Esophagus muscularis mucosa (tissue), 4 donors: ENCODE measurements at regions of chr3 and their contacts with region 1.

Region 1: GRCh38 chr3:50227390-50228183 is 8.4 kb upstream of the GNAI2 start:
- DNase-seq: peak; percentile 95
- H3K4me3 ChIP-seq: peak overlapping the region; percentile 55 to 75 (median 65)
- H3K27ac ChIP-seq: peak overlapping the region; percentile 57 to 73 (median 62)
- H3K4me1 ChIP-seq: peaks cover 17 to 28% (median 27%) of the 10 kb centered on the region in 4 donors
- H3K27me3 ChIP-seq: peaks cover 0 to 7% (median 0%) of the 10 kb centered on the region in 4 donors
- CTCF ChIP-seq: peak; percentile 96 to 97 (median 97)
- EP300 ChIP-seq: no peak
- POLR2A ChIP-seq: no peak

Region 2: DNA sequence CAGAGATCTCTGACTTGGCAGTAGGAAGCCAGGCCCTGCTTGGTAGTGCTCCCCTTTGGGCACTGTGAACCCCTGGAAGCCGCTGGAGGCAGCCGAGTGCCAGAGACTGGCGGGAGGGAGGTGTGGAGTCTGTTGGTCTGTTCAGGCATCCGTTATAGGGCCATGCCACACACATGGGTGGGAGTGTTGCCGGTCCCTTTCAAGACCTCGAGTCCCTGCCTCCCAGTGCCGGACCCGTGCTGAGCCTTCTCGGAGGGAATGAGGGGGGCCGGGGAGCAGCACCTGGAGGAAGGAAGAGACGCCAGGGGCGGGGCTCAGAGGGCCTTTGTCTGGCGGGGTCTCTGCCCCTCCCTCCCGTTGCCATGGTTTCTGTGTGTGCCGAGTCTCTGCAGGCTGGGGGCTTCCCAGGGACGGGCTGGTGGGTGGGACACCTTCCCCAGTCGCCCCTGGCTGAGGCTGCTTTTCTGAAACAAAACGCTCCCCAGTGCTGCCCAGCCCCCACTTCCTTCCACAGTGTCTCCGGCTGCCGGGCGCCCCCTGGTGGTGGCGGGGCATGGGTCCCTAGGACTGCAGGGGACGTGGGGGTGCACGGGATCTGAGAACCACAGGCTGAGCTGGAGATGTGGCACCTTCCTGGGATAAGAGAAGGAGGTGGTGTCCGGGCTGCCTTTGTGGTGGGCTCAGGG is 18.4 kb after region 1 on chr3:
- intact Hi-C with region 1: loop called (anchors 1 kb)
- DNase-seq: peak; percentile 98
- H3K4me3 ChIP-seq: peak overlapping the region; percentile 44 to 62 (median 50)
- H3K27ac ChIP-seq: peak overlapping the region; percentile 86 to 92 (median 90)
- H3K4me1 ChIP-seq: peaks cover 100% of the 10 kb centered on the region in 4 donors
- H3K27me3 ChIP-seq: no peaks in the 10 kb centered on the region
- CTCF ChIP-seq: peak; percentile 97 to 98 (median 98)
- EP300 ChIP-seq: no peak
- POLR2A ChIP-seq: no peak

Region 3: GRCh38 chr3:50392101-50392715 is 164.6 kb after region 1 on chr3:
- intact Hi-C with region 1: no loop called
- DNase-seq: no peak
- H3K4me3 ChIP-seq: no peak overlapping the region
- H3K27ac ChIP-seq: no peak overlapping the region
- H3K4me1 ChIP-seq: peaks cover 6 to 21% (median 11%) of the 10 kb centered on the region in 4 donors
- H3K27me3 ChIP-seq: no peaks in the 10 kb centered on the region
- CTCF ChIP-seq: no peak
- EP300 ChIP-seq: no peak
- POLR2A ChIP-seq: no peak